BJ (cell line): ENCODE measurements at regions of chr1 and their contacts with region 1.

Region 1: GRCh38 chr1:25487628-25488027 is 55.8 kb upstream of the LDLRAP1 start:
- DNase-seq: no peak
- H3K4me3 ChIP-seq: no peak overlapping the region
- H3K27me3 ChIP-seq: no peaks in the 10 kb centered on the region
- CTCF ChIP-seq: peak; percentile 38

Region 2: DNA sequence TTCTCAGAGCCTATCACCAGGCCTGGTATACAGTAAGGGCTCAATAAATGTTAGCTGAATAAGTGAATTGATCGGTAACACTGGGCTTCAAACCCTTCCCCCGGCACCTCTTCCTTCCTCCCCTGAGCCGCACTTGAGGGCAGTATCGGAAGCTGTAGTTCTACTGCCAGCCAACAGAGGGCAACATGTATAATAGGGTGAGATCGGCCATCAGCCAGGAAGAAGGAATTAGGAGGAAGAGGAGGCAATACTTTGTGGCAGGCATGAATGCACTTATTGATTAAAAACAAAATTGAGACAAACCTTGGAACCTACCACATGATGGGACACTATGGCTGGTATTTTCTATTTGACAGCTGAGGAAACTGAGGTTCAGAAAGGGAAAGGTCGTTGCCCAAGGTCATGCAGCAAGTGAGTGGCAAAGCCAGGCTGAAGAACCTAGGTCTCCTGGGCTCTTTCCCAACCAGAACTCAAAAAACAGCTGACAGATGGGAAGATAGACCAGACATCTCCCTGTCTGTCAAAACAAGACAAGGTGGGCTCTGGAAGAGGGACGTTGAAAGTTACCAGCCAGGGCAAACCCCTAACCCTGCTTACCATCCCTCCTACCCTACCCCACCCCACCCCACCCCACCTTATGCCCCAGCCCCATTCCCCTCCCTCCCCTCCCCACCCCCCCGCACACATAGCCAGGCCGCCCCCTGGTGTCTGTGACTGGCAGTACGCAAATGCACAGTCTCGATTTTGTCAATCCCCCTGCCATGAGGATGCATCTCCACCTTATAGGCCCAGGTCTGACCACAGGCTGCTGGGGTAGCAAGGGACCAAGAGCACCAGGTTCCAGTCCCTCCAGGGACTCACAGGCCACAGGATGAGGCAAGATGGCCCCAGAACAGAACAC is 450.2 kb before region 1 on chr1:
- CTCF ChIA-PET with region 1: no interaction called
- POLR2A ChIA-PET with region 1: no interaction called
- DNase-seq: no peak
- H3K4me3 ChIP-seq: no peak overlapping the region
- H3K27me3 ChIP-seq: peaks cover 7% of the 10 kb centered on the region
- CTCF ChIP-seq: peak; percentile 69

Region 3: GRCh38 chr1:25503551-25504426 is 16.2 kb after region 1 on chr1:
- CTCF ChIA-PET with region 1: interaction called, 16 read pairs
- POLR2A ChIA-PET with region 1: no interaction called
- DNase-seq: no peak
- H3K4me3 ChIP-seq: no peak overlapping the region
- H3K27me3 ChIP-seq: no peaks in the 10 kb centered on the region
- CTCF ChIP-seq: peak; percentile 50